AG04449 (cell line): ENCODE measurements at regions of chrX and their contacts with region 1.

Region 1: DNA sequence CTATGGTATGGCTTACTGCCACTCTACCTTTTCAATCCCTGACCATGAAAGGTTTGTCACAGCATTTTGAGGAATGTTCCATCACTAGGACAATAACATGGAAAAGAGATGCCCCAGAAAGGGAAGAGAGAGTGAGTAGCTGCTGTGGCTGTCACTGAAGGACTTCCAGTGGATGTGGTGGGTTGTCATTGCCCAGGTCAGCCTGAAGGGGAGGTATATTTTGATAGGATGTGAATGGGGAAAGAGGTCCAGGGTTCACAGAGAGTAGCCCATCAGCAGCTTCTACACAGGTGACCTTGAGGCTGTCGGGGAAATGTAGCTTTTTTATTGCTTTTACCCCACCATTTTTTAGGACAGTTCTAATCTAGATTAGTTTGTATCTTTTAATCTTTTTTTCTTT is 30.8 kb downstream of the MTM1 start:
- DNase-seq: no peak
- H3K4me3 ChIP-seq: no peak overlapping the region
- CTCF ChIP-seq: no peak

Region 2: GRCh38 chrX:150219374-150220185 is 379.6 kb before region 1 on chrX:
- CTCF ChIA-PET with region 1: no interaction called
- POLR2A ChIA-PET with region 1: no interaction called
- DNase-seq: no peak
- H3K4me3 ChIP-seq: no peak overlapping the region
- CTCF ChIP-seq: no peak

Region 3: GRCh38 chrX:150587585-150588503 is 11.4 kb before region 1 on chrX:
- CTCF ChIA-PET with region 1: interaction called, 22 read pairs
- POLR2A ChIA-PET with region 1: no interaction called
- DNase-seq: no peak
- H3K4me3 ChIP-seq: no peak overlapping the region
- CTCF ChIP-seq: peak; percentile 37